GM12878 (cell line): ENCODE measurements at regions of chr7 and their contacts with region 1.

Region 1: GRCh38 chr7:43834463-43835251 is 34.7 kb downstream of the MRPS24 start:
- DNase-seq: peak; percentile 73
- ATAC-seq: peak; percentile 81
- H3K4me3 ChIP-seq: peak overlapping the region; percentile 52
- H3K27ac ChIP-seq: peak overlapping the region; percentile 69
- H3K4me1 ChIP-seq: peaks cover 4% of the 10 kb centered on the region; the same call in 1 of the 2 replicates
- H3K27me3 ChIP-seq: no peaks in the 10 kb centered on the region
- CTCF ChIP-seq: no peak
- EP300 ChIP-seq: peak in 1 of 2 experiments; percentile 6; a peak in 1 of 4 replicates
- POLR2A ChIP-seq: no peak
- RAD21 ChIP-seq: no peak

Region 2: GRCh38 chr7:41940760-41941343 is 1893.8 kb before region 1 on chr7:
- CTCF ChIA-PET with region 1: interaction called, 3 read pairs
- POLR2A ChIA-PET with region 1: no interaction called
- RAD21 ChIA-PET with region 1: interaction called, 3 read pairs
- SMC1A ChIA-PET with region 1: interaction called, 3 read pairs
- in situ Hi-C with region 1: loop called (anchors 25 kb)
- intact Hi-C with region 1: loop called (anchors 5 kb)
- DNase-seq: peak; percentile 25
- ATAC-seq: peak; percentile 87
- H3K4me3 ChIP-seq: no peak overlapping the region
- H3K27ac ChIP-seq: no peak overlapping the region
- H3K4me1 ChIP-seq: no peaks in the 10 kb centered on the region
- H3K27me3 ChIP-seq: peaks cover 0 to 2% of the 10 kb centered on the region in 2 experiments; a peak in 1 of 4 replicates
- CTCF ChIP-seq: peak; percentile 78 to 87 (median 86)
- EP300 ChIP-seq: no peak
- POLR2A ChIP-seq: no peak
- RAD21 ChIP-seq: peak; percentile 77

Region 3: GRCh38 chr7:43314379-43315189 is 520.1 kb before region 1 on chr7:
- CTCF ChIA-PET with region 1: interaction called, 3 read pairs
- POLR2A ChIA-PET with region 1: interaction called, 3 read pairs
- RAD21 ChIA-PET with region 1: no interaction called
- SMC1A ChIA-PET with region 1: no interaction called
- in situ Hi-C with region 1: loop called (anchors 10 kb)
- intact Hi-C with region 1: no loop called
- DNase-seq: no peak
- ATAC-seq: peak; percentile 85
- H3K4me3 ChIP-seq: no peak overlapping the region
- H3K27ac ChIP-seq: no peak overlapping the region; the same call in 1 of the 2 replicates
- H3K4me1 ChIP-seq: peaks cover 17% of the 10 kb centered on the region
- H3K27me3 ChIP-seq: no peaks in the 10 kb centered on the region
- CTCF ChIP-seq: peak in 2 of 3 experiments; percentile 11 to 36; a peak in 3 of 6 replicates
- EP300 ChIP-seq: peak; percentile 92 to 96; a peak in 3 of 4 replicates
- POLR2A ChIP-seq: no peak
- RAD21 ChIP-seq: peak; percentile 18; the same call in 1 of the 2 replicates

Region 4: DNA sequence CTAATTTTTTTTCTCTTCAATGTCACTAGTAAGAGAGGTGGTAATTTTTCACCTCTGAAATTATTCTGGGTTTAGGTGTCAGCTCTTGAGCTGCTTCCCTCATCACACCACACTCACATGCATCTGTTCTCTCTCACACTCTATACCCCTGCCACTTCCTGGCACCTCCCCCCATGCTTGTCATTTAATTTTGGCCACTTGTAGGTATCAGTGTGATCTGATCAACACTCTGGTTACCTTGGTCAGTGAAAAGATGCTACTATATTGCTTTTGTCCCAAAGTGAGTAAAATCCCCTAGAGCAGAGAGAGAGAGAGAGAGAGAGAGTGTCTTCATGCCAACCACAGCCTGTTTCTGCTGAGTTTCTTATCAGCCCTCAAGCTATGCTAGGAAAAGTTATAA is 209.2 kb before region 1 on chr7:
- CTCF ChIA-PET with region 1: interaction called, 15 read pairs
- POLR2A ChIA-PET with region 1: no interaction called
- RAD21 ChIA-PET with region 1: no interaction called
- SMC1A ChIA-PET with region 1: interaction called, 4 read pairs
- in situ Hi-C with region 1: no loop called
- intact Hi-C with region 1: loop called (anchors 5 kb)
- DNase-seq: no peak
- ATAC-seq: peak; percentile 88
- H3K4me3 ChIP-seq: no peak overlapping the region
- H3K27ac ChIP-seq: peak overlapping the region; percentile 25; the same call in 1 of the 2 replicates
- H3K4me1 ChIP-seq: peaks cover 28% of the 10 kb centered on the region
- H3K27me3 ChIP-seq: no peaks in the 10 kb centered on the region
- CTCF ChIP-seq: no peak
- EP300 ChIP-seq: peak; percentile 8 to 67; a peak in 3 of 4 replicates
- POLR2A ChIP-seq: no peak
- RAD21 ChIP-seq: no peak

Region 5: DNA sequence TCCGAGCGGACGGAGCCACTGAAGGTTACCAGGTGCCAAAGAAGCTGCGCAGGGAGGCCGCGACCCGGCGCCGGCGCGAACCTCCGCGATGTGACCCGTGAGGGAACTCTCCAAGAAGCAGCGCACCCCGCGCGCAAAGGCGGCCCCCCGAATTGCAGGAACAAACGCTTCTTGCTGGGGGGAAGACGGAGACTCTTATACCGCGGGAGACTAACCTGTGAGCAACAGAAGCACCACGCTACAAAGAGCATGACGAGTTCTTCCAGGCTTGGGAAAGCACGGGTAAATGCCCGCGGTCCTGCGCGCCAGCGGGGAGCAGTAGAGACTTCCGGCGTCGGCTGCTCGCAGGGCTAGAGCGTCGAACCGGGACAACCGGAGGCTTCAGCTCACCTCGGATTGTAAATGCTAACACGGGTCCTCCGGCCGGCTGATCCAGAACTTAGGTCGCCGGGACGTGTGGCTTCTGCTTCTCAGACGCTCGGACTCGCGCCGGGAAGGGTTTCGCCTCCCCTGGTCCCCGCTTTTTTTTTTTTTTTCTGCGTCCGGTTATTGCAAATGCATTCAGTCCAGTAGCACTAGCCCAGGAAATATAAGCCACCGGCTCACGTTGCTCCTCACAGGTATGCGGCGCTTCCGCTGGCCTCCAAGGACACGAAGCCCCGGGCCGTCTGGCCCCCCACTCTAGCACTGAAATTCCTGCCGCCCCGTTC is 105.3 kb before region 1 on chr7 and contains the start of gene COA1:
- CTCF ChIA-PET with region 1: interaction called, 84 read pairs
- POLR2A ChIA-PET with region 1: interaction called, 6 read pairs
- RAD21 ChIA-PET with region 1: interaction called, 8 read pairs
- SMC1A ChIA-PET with region 1: interaction called, 38 read pairs
- in situ Hi-C with region 1: loop called (anchors 5 kb)
- intact Hi-C with region 1: loop called (anchors 2 kb)
- DNase-seq: peak; percentile 68
- ATAC-seq: peak; percentile 85
- H3K4me3 ChIP-seq: peak within 1 kb of the TSS; percentile 79
- H3K27ac ChIP-seq: peak within 1 kb of the TSS; percentile 74
- H3K4me1 ChIP-seq: peaks cover 13% of the 10 kb centered on the region
- H3K27me3 ChIP-seq: no peaks in the 10 kb centered on the region
- CTCF ChIP-seq: peak in 2 of 3 experiments; percentile 8 to 24; a peak in 1 of 6 replicates
- EP300 ChIP-seq: no peak
- POLR2A ChIP-seq: peak; percentile 86
- RAD21 ChIP-seq: no peak
- polyA plus RNA-seq, gene COA1: 218 to 258 TPM

Region 6: DNA sequence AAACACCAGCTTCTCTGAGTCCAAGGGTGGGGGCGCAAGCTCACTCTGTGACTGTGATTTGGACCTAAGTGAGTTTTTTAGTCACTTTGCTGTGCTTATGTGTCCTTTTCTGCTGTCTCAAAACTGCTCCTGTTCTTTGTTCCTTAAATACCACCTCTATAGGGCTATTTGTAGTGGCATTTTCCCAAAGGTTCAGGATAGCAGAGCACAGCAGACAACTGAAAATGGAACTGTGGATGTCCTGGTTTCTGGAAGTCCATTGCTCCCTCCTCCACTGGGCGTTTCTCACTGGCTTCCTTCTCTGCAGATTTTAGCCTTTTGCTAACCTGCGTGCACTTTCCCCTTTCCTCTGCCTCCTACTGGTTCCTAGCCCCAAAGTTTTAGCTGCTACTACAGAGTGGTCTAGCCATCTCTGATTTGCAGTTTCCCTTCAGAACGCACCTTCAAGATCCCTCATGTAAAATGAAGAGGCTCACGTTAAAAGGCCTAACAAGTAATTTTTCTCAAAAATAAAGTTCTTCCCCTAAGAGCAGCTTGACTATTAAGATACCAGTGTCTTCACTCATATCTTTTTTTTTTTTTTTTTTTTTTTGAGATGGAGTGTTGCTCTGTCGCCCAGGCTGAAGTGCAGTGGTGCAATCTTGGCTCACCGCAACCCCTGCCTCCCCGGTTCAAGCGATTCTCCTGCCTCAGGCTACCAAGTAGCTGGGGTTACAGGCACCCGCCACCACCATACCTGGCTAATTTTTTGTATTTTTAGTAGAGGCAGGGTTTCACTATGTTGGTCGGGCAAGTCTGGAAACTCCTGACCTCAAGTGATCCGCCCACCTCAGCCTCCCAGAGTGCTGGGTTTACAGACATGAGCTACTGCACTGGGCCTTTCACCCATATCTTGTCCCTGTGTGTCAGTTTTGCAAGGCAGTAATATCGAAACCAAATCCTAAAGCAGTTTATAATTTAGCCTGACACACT is 50.3 kb before region 1 on chr7:
- CTCF ChIA-PET with region 1: interaction called, 22 read pairs
- POLR2A ChIA-PET with region 1: interaction called, 3 read pairs
- RAD21 ChIA-PET with region 1: interaction called, 7 read pairs
- SMC1A ChIA-PET with region 1: interaction called, 15 read pairs
- in situ Hi-C with region 1: no loop called
- intact Hi-C with region 1: no loop called
- DNase-seq: peak; percentile 82
- ATAC-seq: peak; percentile 97
- H3K4me3 ChIP-seq: peak overlapping the region; percentile 47
- H3K27ac ChIP-seq: peak overlapping the region; percentile 56
- H3K4me1 ChIP-seq: peaks cover 16% of the 10 kb centered on the region
- H3K27me3 ChIP-seq: no peaks in the 10 kb centered on the region
- CTCF ChIP-seq: no peak; a peak in 1 of 6 replicates
- EP300 ChIP-seq: no peak
- POLR2A ChIP-seq: no peak
- RAD21 ChIP-seq: no peak